GM23248 (cell line): ENCODE measurements at regions of chr1 and their contacts with region 1.

Region 1: DNA sequence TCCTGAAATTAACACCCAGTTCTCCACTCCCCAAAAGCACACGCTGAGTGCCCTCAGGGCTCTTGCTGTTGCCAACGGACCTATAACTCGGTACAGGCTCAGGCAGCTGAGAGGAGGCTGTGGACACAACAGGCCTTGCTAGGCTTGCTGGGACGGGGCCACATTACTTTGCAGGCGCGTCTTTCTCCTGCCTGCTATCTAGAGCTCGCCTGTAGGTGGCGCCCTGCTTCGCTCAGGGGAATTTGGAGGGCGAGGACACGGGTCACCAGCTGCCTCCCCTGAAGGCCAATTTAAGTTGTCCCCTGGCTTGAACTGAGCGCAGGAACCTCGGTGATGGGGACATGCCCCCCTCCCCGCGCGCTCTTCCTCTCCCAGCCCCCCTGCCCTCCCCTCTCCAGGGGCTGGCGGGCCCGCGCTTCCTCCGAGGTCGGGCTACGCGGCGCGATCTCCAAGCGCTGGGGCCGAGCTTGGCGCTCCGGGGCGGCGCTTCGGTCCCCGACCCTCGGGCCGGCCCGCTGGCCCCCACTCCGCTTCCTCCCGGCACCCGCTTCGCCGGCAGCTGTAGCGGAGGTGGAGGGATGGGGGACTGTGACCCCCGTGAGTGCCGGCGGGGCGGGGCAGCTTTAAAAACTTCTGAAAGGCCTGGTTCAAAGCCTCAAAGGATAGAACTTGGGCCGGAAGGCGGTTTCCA is 32.4 kb upstream of the NFIA start:
- DNase-seq: peak; percentile 86
- H3K4me3 ChIP-seq: peak overlapping the region; percentile 76
- H3K27ac ChIP-seq: no peak overlapping the region
- H3K4me1 ChIP-seq: no peaks in the 10 kb centered on the region
- H3K27me3 ChIP-seq: peaks cover 32% of the 10 kb centered on the region

Region 2: GRCh38 chr1:60171801-60172200 is 878.2 kb before region 1 on chr1:
- in situ Hi-C with region 1: loop called (anchors 25 kb)
- DNase-seq: peak; percentile 74
- H3K4me3 ChIP-seq: no peak overlapping the region
- H3K27ac ChIP-seq: no peak overlapping the region
- H3K4me1 ChIP-seq: peaks cover 34% of the 10 kb centered on the region
- H3K27me3 ChIP-seq: no peaks in the 10 kb centered on the region

Region 3: GRCh38 chr1:60281360-60281932 is 768.5 kb before region 1 on chr1:
- in situ Hi-C with region 1: loop called (anchors 25 kb)
- DNase-seq: peak; percentile 82
- H3K4me3 ChIP-seq: no peak overlapping the region
- H3K27ac ChIP-seq: no peak overlapping the region
- H3K4me1 ChIP-seq: peaks cover 24% of the 10 kb centered on the region
- H3K27me3 ChIP-seq: no peaks in the 10 kb centered on the region

Region 4: DNA sequence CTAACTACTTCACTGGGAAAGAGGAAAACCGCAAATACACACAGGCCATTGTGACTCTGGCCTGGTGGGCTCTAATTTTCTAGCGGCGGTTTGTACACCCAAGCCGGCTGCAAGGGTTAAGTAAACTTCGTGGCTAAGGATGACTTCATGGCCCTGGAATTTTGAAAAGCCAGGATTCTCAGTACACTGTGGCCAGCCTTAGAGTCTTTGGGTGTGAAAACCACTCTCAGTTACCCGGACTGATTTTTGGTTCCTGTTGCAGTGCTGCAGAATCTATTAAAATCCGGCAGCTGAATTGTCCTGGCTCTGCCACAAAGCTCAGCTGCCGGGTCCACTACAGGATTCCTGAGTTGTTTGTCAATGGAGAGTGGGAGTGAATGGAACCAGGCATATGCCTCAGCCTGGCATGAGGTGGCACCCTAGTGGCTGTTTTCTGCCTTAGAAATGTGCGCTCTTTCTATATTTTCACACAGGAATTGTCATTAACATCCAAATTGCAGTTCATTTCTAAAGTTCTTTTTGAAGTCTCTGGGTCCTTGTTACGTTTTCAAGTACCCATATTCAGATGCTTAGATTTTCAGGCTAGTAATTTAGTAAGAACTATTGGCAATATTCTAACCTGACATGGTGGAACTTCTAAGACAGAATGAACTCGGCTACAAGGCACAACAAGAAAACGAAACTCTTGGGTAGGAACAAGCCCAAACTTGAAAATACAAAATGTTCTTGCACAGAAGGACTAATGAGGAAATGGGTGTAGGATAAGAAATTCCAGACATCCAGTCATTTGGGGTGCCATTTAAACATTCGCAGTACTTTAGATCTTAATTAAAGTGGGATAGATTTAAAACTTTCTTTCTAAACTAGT is 288.2 kb after region 1 on chr1:
- in situ Hi-C with region 1: loop called (anchors 25 kb)
- DNase-seq: peak; percentile 96
- H3K4me3 ChIP-seq: peak overlapping the region; percentile 71
- H3K27ac ChIP-seq: peak overlapping the region; percentile 61
- H3K4me1 ChIP-seq: peaks cover 17% of the 10 kb centered on the region
- H3K27me3 ChIP-seq: no peaks in the 10 kb centered on the region

Region 5: GRCh38 chr1:61472876-61473275 is 422.9 kb after region 1 on chr1:
- in situ Hi-C with region 1: no loop called
- DNase-seq: peak; percentile 72
- H3K4me3 ChIP-seq: no peak overlapping the region
- H3K27ac ChIP-seq: no peak overlapping the region
- H3K4me1 ChIP-seq: no peaks in the 10 kb centered on the region
- H3K27me3 ChIP-seq: 0 out of 2 replicates have a peak, but pooled peaks cover 5% of the 10 kb centered on the region

Region 6: DNA sequence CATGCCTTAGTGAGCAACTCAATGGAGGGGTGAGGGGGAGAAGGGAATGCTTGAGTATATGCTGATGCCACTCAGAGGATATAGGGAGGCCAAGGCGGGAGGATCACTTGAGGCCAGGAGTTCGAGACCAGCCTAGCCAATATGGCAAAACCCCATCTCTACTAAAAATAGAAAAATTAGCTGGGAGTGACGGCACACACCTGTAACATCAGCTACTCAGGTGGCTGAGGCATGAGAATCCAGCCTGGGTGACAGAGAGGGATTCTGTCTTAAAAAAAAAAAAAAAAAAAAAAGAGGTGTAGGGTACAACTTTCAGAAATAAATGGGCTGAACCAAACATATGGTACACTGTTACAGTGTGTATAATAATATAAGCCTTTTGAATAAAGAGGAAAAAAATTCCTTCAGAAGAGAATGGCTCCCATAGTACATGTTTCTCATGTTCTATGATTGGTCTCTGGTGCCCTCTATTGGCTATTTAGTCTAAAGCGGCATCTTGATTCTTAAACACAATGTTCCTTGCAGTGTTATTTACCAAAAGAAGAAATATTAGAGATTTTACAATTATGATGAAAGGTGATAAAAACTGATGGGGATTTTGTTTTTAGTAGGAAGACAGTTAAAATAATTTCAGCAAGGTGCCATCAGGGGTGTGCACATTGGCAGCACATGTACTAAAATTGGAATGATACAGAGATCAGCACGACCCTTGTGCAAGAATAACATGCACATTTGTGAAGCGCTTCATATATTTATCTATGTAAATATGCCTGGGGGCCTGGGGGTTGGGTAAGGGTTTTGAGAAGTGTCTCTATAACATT is 802.1 kb after region 1 on chr1:
- in situ Hi-C with region 1: loop called (anchors 25 kb)
- DNase-seq: peak; percentile 81
- H3K4me3 ChIP-seq: no peak overlapping the region
- H3K27ac ChIP-seq: no peak overlapping the region
- H3K4me1 ChIP-seq: peaks cover 3% of the 10 kb centered on the region
- H3K27me3 ChIP-seq: no peaks in the 10 kb centered on the region